HepG2 (cell line): ENCODE measurements at regions of chr17 and their contacts with region 1.

Region 1: DNA sequence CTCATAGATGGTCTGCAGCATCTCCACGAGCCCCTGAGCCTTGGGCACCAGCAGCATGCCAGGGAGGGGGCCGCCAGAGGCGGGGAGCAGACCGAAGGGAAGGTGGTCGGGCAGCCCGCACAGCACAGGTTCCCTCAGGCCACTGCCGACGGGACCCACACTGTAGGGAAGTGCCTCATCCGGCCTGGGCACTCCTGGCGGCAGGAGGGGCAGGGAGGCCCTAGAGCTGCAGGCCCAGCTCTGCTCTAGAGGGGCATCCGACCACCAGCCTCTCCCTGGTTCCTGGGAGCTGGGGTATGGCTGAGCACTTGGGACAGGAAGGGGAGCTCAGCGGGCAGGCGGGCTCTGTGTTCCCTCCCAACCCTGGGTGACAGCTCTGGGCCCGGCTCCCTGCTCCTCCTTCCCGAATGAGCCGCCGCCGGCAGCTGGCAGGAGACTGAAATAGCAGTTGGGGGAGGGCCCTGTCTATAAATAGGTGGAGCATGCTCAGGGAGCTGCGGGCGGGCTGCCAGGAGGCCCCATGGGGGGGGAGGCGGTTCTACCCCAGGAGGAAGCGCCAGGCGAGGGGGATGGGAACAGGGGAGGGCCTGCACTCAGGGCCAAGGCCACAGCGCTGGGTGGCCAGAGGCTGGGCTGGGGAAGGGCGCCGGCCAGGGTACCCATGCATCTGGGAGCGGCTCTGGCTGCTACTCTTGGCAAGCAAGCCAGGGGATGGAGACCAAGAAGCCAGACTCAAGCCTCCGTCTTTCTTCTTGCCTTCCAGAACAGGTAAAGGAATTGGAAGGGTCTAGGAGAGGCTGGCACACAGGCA is 12.4 kb downstream of the HDAC5 start:
- DNase-seq: peak; percentile 96
- ATAC-seq: peak; percentile 76
- H3K4me3 ChIP-seq: peak overlapping the region; percentile 76 to 86 (median 85)
- H3K27ac ChIP-seq: peak overlapping the region; percentile 88
- H3K4me1 ChIP-seq: peaks cover 97% of the 10 kb centered on the region
- H3K27me3 ChIP-seq: no peaks in the 10 kb centered on the region
- CTCF ChIP-seq: peak; percentile 56
- EP300 ChIP-seq: peak; percentile 93 to 96
- POLR2A ChIP-seq: peak; percentile 92 to 94
- RAD21 ChIP-seq: peak; percentile 78

Region 2: GRCh38 chr17:44070455-44071197 is 40.4 kb before region 1 on chr17 and contains the start of gene G6PC3:
- CTCF ChIA-PET with region 1: no interaction called
- POLR2A ChIA-PET with region 1: interaction called, 31 read pairs
- in situ Hi-C with region 1: no loop called
- intact Hi-C with region 1: loop called (anchors 2 kb)
- DNase-seq: peak; percentile 99
- ATAC-seq: peak; percentile 84
- H3K4me3 ChIP-seq: peak within 1 kb of the TSS; percentile 63 to 96 (median 77)
- H3K27ac ChIP-seq: peak within 1 kb of the TSS; percentile 88
- H3K4me1 ChIP-seq: peaks cover 34% of the 10 kb centered on the region
- H3K27me3 ChIP-seq: peaks cover 0 to 3% of the 10 kb centered on the region in 2 experiments; a peak in 1 of 5 replicates
- CTCF ChIP-seq: peak; percentile 41
- EP300 ChIP-seq: peak; percentile 14 to 84; a peak in 3 of 4 replicates
- POLR2A ChIP-seq: peak; percentile 96 to 98
- RAD21 ChIP-seq: peak; percentile 63
- total RNA-seq, gene G6PC3: 18.8 and 38.5 TPM in 2 replicates

Region 3: DNA sequence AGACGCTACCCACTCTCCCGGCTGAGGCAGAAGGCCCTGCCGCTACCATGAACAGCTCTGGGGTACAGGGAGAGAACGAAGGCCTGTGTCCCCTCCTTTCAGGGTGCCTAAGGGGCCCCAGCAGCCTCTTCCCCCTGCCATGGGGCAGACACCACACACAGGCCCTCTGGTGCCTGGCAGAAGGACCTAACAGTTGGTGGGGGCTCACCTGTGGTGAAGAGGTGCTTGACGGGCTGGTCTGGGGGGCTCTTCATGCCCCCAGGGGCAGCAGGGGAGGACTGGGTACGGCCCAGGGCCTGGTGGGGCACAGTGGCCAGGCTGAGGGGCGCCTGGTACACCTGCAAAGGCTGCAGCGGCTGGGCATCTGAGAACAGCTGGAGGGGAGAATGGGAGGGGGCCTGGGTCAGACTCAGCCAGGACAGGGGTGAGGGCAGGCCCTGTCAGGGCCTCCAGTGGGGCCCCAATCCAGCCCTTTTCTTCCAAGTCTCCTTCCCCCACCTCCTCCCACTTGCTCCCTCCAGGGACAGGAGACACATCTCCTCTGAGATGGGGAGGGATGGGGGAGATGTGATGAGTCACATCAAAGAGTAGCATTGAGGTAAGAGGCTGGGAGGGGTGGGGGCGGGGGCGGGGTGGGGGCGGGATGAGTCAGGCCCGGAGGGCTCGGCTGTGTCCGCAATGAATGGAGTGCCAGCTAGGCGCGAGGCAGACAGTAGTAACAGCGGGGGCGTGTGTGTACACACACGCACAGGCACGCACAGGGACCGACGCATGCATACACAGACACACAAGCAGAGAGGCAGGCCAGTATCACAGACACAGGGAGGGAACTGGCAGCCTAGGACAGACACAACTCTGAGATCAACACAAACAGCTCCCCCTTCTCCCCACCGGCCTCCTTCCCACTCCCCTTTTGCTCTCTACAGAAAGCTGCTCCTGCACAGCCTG is 24.4 kb before region 1 on chr17:
- CTCF ChIA-PET with region 1: interaction called, 80 read pairs
- POLR2A ChIA-PET with region 1: interaction called, 12 read pairs
- in situ Hi-C with region 1: no loop called
- intact Hi-C with region 1: loop called (anchors 1 kb)
- DNase-seq: peak; percentile 83
- ATAC-seq: peak; percentile 63
- H3K4me3 ChIP-seq: peak overlapping the region in 1 of 3 experiments; percentile 12; a peak in 1 of 6 replicates
- H3K27ac ChIP-seq: peak overlapping the region; percentile 15
- H3K4me1 ChIP-seq: peaks cover 31% of the 10 kb centered on the region
- H3K27me3 ChIP-seq: no peaks in the 10 kb centered on the region
- CTCF ChIP-seq: 0 out of 2 replicates have a peak, but pooled peaks have one; percentile 21
- EP300 ChIP-seq: 0 out of 4 replicates have a peak, but pooled peaks of 1 of the 2 experiments have one; percentile 15
- POLR2A ChIP-seq: peak in 1 of 2 experiments; percentile 13; a peak in 1 of 4 replicates
- RAD21 ChIP-seq: 0 out of 2 replicates have a peak, but pooled peaks have one; percentile 22

Region 4: DNA sequence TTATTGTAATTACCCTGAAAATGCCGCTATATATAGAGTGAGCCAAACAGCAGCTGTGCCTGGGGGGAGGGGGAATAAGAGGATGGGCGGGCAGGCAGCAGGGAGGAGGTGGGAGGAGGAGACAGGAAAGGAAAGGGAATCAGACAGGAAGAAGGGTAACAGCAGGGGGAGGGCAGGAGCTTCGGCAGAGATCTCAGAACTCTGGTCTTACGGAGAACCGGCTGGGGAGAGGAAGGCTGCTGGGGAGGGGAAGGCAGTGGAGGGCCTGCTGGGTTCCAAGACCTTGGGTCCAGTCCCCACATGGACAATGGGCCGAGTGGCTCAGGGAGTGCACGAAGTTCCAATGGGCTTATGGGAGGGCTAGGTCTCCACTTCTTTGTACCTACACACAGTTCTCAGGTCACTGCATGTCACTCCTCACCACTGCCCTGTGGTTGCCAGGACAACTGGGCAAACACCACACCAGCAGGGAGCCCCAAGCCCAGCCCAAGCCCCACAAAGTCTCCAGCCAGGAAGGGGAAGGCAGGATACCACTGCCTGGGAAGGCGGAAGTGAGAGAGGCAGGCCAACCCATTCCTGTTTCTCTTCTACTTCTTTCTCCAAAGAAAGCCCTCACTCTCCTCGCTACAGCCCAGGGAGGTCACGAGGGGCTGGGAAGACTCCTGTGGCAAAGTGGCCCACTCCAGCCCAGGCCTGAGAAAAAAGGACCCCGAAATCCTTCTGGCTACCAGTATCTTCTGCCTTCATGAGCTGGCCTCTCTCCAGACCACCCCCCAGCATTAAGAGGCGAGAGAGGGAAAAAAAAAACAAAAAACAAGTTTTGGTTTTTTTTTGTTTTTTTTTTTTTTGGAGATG is 15.2 kb before region 1 on chr17:
- CTCF ChIA-PET with region 1: interaction called, 17 read pairs
- POLR2A ChIA-PET with region 1: interaction called, 23 read pairs
- in situ Hi-C with region 1: no loop called
- intact Hi-C with region 1: loop called (anchors 2 kb)
- DNase-seq: peak; percentile 94
- ATAC-seq: peak; percentile 92
- H3K4me3 ChIP-seq: peak overlapping the region; percentile 28 to 68 (median 31); a peak in 5 of 6 replicates
- H3K27ac ChIP-seq: peak overlapping the region; percentile 94
- H3K4me1 ChIP-seq: peaks cover 47% of the 10 kb centered on the region
- H3K27me3 ChIP-seq: no peaks in the 10 kb centered on the region
- CTCF ChIP-seq: peak; percentile 81
- EP300 ChIP-seq: no peak; a peak in 1 of 4 replicates
- POLR2A ChIP-seq: peak; percentile 74 to 89
- RAD21 ChIP-seq: peak; percentile 85

Region 5: GRCh38 chr17:44141717-44142285 is 30.8 kb after region 1 on chr17 and contains the start of gene HROB:
- CTCF ChIA-PET with region 1: no interaction called
- POLR2A ChIA-PET with region 1: interaction called, 11 read pairs
- in situ Hi-C with region 1: no loop called
- intact Hi-C with region 1: no loop called
- DNase-seq: peak; percentile 92
- ATAC-seq: peak; percentile 79
- H3K4me3 ChIP-seq: peak within 1 kb of the TSS; percentile 85 to 100 (median 99)
- H3K27ac ChIP-seq: peak within 1 kb of the TSS; percentile 85
- H3K4me1 ChIP-seq: peaks cover 46% of the 10 kb centered on the region
- H3K27me3 ChIP-seq: no peaks in the 10 kb centered on the region
- CTCF ChIP-seq: peak; percentile 93
- EP300 ChIP-seq: peak in 1 of 2 experiments; percentile 65; a peak in 3 of 4 replicates
- POLR2A ChIP-seq: peak; percentile 35 to 43; a peak in 1 of 4 replicates
- RAD21 ChIP-seq: peak; percentile 74; the same call in 1 of the 2 replicates
- total RNA-seq, gene HROB: 6.7 and 7.1 TPM in 2 replicates